Gastrocnemius medialis (tissue), 4 donors: ENCODE measurements at regions of chr10 and their contacts with region 1.

Region 1: GRCh38 chr10:68720793-68721672 is at the start of gene CCAR1:
- DNase-seq: peak; percentile 93 to 95
- ATAC-seq: peak; percentile 97 to 98
- H3K4me3 ChIP-seq: peak within 1 kb of the TSS; percentile 88 to 96 (median 90)
- H3K27ac ChIP-seq: peak within 1 kb of the TSS; percentile 94 to 99 (median 96)
- H3K4me1 ChIP-seq: peaks cover 7 to 9% of the 10 kb centered on the region in 2 donors
- H3K27me3 ChIP-seq: no peaks in the 10 kb centered on the region
- CTCF ChIP-seq: no peak
- POLR2A ChIP-seq: peak; percentile 67 to 73
- total RNA-seq, gene CCAR1: 17.8 to 71.3 (median 37.7) TPM

Region 2: DNA sequence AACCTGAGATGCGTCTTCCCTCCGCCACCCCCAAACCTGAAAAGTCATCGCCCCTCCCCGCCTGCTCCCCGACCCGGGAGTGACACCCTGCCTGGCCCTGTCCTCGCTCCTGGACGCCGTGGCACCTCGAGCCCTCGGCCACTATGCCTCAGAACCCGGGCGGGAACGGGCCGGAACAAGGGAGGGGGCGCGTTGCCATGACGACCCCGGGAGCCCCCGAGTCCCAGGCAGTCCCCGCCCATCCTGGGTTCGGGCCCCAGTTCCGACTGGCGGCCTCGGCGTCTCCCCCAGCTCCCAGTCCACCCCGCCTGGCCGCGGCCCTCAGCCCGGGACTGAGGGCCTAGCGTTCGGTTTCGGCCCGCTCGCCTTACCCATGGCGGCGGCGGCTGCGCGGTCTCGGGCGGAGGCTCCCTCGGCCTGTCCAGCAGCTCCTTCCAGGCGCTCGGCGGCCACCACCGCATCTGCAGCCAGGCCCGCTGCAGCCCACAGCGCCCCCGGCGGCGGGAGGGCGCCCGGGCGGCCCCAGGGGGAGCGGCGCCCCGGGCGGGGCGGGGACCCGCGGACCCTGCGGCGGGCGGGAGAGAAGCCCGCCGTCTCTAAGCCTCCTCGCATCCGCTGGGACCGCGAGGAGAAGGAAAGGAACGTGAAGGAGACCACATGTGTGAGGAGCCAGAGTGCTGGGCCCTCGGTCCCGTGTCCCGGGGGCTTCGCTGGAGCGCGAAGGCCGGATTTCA is 314.1 kb before region 1 on chr10 and contains the start of gene RUFY2:
- in situ Hi-C with region 1: no loop called
- intact Hi-C with region 1: loop called (anchors 2 kb)
- DNase-seq: peak; percentile 32 to 58
- ATAC-seq: peak; percentile 92 to 96
- H3K4me3 ChIP-seq: peak within 1 kb of the TSS; percentile 83 to 100 (median 96)
- H3K27ac ChIP-seq: peak within 1 kb of the TSS; percentile 87 to 95 (median 92)
- H3K4me1 ChIP-seq: peaks cover 3 to 11% of the 10 kb centered on the region in 2 donors
- H3K27me3 ChIP-seq: no peaks in the 10 kb centered on the region
- CTCF ChIP-seq: peak; percentile 45 to 99 (median 95)
- POLR2A ChIP-seq: peak; percentile 60 to 69
- total RNA-seq, gene RUFY2: 8.9 to 15.7 (median 11.7) TPM

Region 3: DNA sequence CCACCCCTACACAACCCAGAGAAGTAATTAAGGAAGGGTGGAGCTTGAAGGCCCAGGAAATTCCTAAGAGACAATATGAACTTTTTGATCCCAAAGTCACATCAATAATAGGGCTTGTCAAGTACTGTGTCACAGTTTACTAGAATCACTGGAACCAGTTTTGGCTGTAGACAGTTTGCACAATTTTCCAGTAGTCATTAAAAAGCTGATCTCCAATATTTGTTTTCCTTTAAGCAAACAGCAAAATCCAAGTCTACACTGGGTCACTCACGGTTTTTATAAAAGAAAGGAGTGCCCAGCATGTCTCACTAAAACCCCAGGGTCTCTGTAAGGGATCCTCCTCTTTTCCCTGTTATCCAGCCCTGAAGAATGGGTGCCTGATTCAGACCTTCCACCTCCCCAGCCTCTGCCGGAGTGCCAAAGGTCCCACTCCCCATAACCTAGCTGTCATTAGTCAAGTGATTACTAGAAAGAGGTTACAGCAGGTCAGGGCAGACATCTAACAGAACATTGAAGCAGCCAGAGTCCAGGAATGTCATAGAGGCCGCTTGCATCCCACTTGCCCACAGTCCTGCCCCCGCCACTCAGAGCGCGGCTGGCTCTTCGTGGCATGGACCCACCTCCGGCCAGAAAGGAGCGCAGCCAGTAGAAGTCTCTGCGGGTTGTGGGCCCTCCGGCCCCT is 194.3 kb before region 1 on chr10:
- in situ Hi-C with region 1: loop called in 1 of 4 experiments (anchors 25 kb)
- intact Hi-C with region 1: loop called (anchors 1 kb)
- DNase-seq: no peak
- ATAC-seq: peak; percentile 61 to 74
- H3K4me3 ChIP-seq: peak overlapping the region; percentile 83 to 100 (median 93)
- H3K27ac ChIP-seq: peak overlapping the region; percentile 88 to 100 (median 99)
- H3K4me1 ChIP-seq: peaks cover 4 to 8% of the 10 kb centered on the region in 2 donors
- H3K27me3 ChIP-seq: no peaks in the 10 kb centered on the region
- CTCF ChIP-seq: no peak
- POLR2A ChIP-seq: no peak

Region 4: GRCh38 chr10:68550747-68551411 is 170.2 kb before region 1 on chr10:
- in situ Hi-C with region 1: loop called in 1 of 4 experiments (anchors 25 kb)
- intact Hi-C with region 1: loop called (anchors 10 kb)
- DNase-seq: peak in 1 of 2 donors; percentile 35
- ATAC-seq: peak; percentile 88 to 89
- H3K4me3 ChIP-seq: no peak overlapping the region
- H3K27ac ChIP-seq: no peak overlapping the region
- H3K4me1 ChIP-seq: no peaks in the 10 kb centered on the region
- H3K27me3 ChIP-seq: no peaks in the 10 kb centered on the region
- CTCF ChIP-seq: peak in 4 of 5 experiments; percentile 50 to 74 (median 62)
- POLR2A ChIP-seq: no peak

Region 5: DNA sequence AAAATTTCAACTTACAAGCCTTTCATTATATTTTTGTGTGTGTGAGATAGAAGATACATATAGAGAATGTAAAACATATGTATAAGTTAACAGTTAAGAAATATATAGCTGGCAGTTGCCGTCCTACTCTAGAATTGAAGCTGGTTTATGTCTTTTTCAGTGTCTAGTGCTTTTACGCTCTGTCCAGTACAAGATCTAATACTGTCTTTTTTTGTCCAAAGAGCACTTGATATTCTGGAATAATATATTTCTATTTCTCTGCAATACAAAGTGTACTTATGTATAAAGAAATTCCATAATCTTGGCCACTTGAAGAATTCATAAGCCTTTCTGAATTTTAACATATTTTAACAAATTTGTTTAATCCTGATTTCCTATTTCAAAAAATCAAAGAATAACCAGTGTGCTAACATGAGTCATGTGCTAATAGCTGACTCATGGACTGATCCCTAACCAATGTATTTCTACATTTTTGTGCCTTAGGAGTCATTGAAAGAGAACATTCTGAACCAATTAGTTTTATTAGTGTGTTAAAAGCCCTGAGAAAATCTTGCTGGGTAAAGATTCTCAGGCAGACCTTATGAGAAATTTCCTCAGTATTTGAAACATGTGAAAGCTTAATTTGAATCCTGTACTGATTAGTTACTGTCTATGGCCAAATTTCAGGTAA is 73.2 kb before region 1 on chr10:
- in situ Hi-C with region 1: no loop called
- intact Hi-C with region 1: no loop called
- DNase-seq: no peak
- ATAC-seq: peak; percentile 75 to 83
- H3K4me3 ChIP-seq: no peak overlapping the region
- H3K27ac ChIP-seq: peak overlapping the region; percentile 4 to 31 (median 20)
- H3K4me1 ChIP-seq: no peaks in the 10 kb centered on the region
- H3K27me3 ChIP-seq: no peaks in the 10 kb centered on the region
- CTCF ChIP-seq: no peak
- POLR2A ChIP-seq: no peak

Region 6: DNA sequence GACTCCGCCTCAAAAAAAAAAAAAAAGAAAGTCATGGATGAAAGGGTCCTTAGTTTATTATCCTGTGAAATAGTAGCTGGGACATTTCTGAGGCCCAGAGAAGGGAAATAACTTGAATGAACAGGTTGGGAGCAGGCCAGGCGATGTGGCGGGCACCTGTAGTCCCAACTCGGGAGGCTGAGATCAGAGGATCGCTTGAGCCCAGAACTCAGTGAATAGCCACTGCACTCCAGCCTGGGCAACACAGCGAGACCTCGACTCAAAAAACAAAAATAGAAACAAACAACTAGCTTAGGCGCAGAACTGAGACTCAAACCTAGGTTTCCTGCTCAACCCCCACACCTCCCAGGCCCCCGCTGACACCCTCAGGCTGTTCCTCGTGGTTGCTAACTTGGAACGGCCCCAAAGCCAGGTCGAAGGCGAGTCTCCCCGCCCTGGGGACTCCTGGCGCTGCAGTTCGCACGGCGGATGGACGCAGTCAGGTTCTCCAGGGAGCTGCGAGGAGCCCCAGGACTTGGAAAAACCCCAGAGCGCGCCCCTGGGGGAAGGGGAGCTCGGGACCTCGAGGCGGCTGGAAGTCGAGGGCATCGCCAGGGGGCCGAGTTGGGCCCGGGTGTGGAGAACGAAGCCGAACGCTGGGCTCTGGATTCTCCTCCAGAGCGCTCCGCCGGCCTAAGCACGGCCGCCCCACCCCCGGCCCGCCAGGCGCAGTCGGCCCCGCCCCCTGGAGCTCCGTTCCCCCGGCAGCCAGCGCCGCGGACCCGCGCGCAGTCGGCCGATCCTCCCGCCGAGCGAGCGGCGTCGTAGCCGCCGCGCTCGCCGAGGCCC is 105.9 kb after region 1 on chr10 and contains the start of gene STOX1:
- in situ Hi-C with region 1: no loop called
- intact Hi-C with region 1: no loop called
- DNase-seq: peak; percentile 10 to 15
- ATAC-seq: peak; percentile 72 to 73
- H3K4me3 ChIP-seq: peak within 1 kb of the TSS; percentile 52 to 70 (median 59)
- H3K27ac ChIP-seq: peak within 1 kb of the TSS in 1 of 4 donors; percentile 18
- H3K4me1 ChIP-seq: peaks cover 0 to 4% of the 10 kb centered on the region in 2 donors
- H3K27me3 ChIP-seq: no peaks in the 10 kb centered on the region
- CTCF ChIP-seq: no peak
- POLR2A ChIP-seq: no peak
- total RNA-seq, gene STOX1: 0.10 to 1.5 (median 1.1) TPM